ENCODE measurements at regions of chr22 and their contacts with region 1.

Region 1: GRCh38 chr22:19115628-19116027 is 6.6 kb downstream of the DGCR2 start:
- DNase-seq: no peak
- ATAC-seq: peak; percentile 75
- H3K4me3 ChIP-seq: no peak overlapping the region
- H3K27ac ChIP-seq: no peak overlapping the region
- H3K4me1 ChIP-seq: peaks cover 24% of the 10 kb centered on the region
- H3K27me3 ChIP-seq: no peaks in the 10 kb centered on the region
- CTCF ChIP-seq: peak; percentile 36 to 50 (median 46); a peak in 5 of 6 replicates
- EP300 ChIP-seq: no peak
- POLR2A ChIP-seq: no peak
- RAD21 ChIP-seq: no peak; the same call in 1 of the 2 replicates

Region 2: DNA sequence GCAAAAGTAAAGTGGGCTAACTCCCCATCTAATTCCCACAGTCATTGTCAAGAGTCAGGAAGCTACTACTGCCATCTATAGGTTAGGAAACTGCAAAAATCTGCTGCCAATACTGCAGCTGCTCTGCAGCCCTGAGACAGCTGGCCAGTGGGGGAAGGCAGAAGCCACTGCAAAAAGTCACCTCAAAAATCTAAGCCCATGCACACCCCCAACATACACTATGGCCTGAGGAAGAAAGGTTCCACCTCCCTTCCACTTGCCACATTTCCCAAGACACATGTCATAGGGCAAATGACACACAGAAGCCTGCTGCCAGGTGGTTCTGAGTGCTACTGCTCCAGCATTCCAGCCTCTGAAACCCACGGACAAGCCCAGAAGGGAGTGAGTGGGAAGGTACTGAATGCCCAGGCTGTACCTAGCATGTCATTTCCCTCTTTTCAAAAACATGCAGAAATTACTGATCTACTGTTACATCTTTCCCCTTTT is 30.4 kb before region 1 on chr22:
- CTCF ChIA-PET with region 1: interaction called, 8 read pairs
- POLR2A ChIA-PET with region 1: no interaction called
- RAD21 ChIA-PET with region 1: interaction called, 14 read pairs
- SMC1A ChIA-PET with region 1: interaction called, 7 read pairs
- in situ Hi-C with region 1: no loop called
- intact Hi-C with region 1: no loop called
- DNase-seq: no peak
- ATAC-seq: peak; percentile 78
- H3K4me3 ChIP-seq: no peak overlapping the region
- H3K27ac ChIP-seq: peak overlapping the region; percentile 75
- H3K4me1 ChIP-seq: peaks cover 14% of the 10 kb centered on the region
- H3K27me3 ChIP-seq: no peaks in the 10 kb centered on the region
- CTCF ChIP-seq: peak; percentile 27 to 52 (median 39); a peak in 4 of 6 replicates
- EP300 ChIP-seq: no peak
- POLR2A ChIP-seq: no peak
- RAD21 ChIP-seq: peak; percentile 37; the same call in 1 of the 2 replicates

Measured in GM12878 (cell line).